ENCODE measurements at regions of chr12 and their contacts with region 1.

Region 1: DNA sequence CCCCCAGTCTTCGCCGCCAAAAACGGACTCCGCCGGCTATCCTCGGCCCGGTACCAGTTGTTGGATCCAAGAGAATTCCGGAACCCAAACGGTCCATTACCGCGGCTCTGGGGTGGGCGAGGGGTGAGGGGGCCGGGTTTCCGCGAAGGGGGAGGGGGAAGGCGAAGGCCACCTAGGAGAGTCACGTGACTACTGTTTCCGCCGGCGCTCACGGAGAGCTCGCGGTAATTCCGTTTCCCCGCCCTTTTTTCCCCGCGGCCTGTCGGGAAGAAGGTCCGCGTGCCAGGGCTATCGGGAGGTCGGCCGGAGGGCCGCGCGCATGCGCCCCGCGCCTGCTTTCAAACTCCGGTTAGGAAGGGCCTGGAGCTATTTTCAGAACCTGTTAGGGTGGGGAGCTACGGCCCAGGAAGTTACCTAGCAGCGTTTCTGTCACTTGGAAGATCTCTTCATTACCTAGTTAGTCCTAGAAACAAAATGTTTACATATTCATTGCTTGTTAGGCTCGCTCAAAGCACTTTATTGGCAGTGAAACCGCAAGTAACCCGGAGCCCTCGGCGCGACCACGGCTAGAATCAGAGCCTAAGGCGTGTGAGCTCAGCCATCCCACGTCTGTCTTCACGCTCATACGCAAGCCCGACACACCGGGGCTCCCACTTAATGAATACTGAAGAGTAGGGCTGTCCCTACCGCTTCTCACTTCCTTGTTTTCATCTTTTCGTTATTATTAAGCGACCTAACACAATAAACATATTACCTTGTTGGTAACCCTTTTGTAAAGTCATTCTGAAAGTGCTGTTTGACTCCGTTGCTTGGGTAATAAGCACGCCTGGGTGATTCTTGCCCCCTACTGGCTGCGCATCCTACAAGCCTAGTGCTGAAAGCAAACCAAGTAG is 624 bp upstream of the SBNO1 start:
- DNase-seq: peak; percentile 99
- ATAC-seq: peak; percentile 90 to 96 (median 94)
- H3K4me3 ChIP-seq: peak overlapping the region; percentile 67 to 98 (median 87)
- H3K27ac ChIP-seq: peak overlapping the region; percentile 82 to 99 (median 95)
- H3K4me1 ChIP-seq: peaks cover 4 to 38% (median 21%) of the 10 kb centered on the region in 12 donors
- H3K27me3 ChIP-seq: no peaks in the 10 kb centered on the region
- CTCF ChIP-seq: peak; percentile 52 to 96 (median 73)
- POLR2A ChIP-seq: peak in 1 of 2 donors; percentile 76

Region 2: DNA sequence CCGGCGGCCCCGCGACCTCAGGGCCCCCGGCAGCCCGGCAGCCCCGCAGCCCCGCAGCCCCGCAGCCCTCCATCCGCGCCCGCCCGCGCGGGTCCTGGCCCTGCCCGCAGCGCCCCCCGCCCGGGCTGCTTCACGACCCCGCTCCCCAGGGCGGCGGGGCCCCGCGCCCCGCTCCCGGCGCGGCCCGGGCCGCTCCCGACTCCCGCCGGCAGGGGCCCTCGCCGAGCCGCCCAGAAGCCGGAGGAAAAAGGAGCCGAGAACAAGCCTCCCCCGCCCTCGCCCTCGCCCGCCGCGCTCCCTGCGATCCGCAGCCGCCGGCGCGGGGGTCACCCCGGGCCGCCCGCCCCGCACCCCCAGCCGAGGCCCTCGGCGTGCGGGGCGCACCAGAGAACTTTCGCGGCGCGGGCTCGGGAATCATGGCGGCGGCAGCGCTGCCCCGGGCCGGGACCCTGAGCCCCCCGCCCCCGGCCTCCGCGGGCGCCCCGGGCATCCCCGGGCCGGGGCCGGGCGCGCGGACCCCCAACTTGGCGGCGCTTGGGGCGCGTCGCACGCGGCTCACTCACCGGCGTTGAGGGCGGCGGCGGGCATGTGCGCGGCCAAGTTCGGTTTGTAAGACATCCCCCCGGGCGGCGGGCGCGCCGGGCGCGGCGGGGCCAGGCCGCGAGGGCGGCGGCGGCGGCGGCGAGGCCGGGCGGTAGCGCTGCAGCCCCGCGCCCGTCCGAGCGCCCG is 94.1 kb before region 1 on chr12:
- intact Hi-C with region 1: loop called in 2 of 10 experiments (anchors 2 kb)
- DNase-seq: peak; percentile 74 to 88 (median 84)
- ATAC-seq: peak in 3 of 4 donors; percentile 56 to 62 (median 58)
- H3K4me3 ChIP-seq: peak overlapping the region; percentile 61 to 93 (median 76)
- H3K27ac ChIP-seq: peak overlapping the region; percentile 58 to 93 (median 84)
- H3K4me1 ChIP-seq: peaks cover 3 to 39% (median 29%) of the 10 kb centered on the region in 12 donors
- H3K27me3 ChIP-seq: no peaks in the 10 kb centered on the region
- CTCF ChIP-seq: peak; percentile 1 to 75 (median 47)
- POLR2A ChIP-seq: no peak

Region 3: DNA sequence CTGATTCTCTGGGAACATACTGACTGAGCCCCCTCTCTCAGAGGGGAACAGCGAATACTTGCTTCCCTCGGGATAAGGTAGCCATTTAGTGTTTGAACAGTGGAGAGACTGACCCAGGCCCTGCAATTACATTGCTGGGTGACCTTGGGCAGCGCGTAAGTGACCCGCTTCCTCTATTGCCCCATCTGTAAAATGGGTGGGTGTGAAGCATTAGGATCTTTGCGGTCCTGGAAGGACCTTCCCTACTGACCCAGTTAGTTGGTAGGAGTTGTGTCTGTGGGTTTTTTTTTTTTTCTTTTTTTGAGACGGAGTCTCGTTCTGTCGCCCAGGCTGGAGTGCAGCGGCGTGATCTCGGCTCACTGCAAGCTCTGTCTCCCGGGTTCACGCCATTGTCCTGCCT is 17.4 kb after region 1 on chr12:
- intact Hi-C with region 1: loop called in 6 of 10 experiments (anchors 1 to 2 kb)
- DNase-seq: peak in 1 of 5 donors; percentile 26
- ATAC-seq: no peak
- H3K4me3 ChIP-seq: peak overlapping the region in 4 of 12 donors; percentile 80 to 89 (median 82)
- H3K27ac ChIP-seq: no peak overlapping the region
- H3K4me1 ChIP-seq: peaks cover 0 to 26% (median 14%) of the 10 kb centered on the region in 12 donors
- H3K27me3 ChIP-seq: no peaks in the 10 kb centered on the region
- CTCF ChIP-seq: no peak
- POLR2A ChIP-seq: no peak

Region 4: DNA sequence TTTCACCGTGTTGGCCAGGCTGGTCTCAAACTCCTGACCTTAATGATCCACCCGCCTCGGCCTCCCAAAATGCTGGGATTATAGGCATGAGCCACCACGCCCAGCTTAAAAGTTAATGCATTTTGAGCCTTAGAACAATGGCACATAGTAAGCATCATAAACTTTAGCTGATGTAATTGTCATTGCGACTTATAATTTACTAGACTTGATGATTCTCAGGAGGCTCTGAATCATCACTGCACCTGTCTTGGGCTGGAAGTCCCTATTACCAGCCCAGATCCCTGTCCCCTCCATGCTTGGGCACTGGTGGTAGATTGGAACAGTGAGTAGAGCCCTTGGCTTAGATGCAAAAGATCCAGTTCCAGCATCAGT is 44.8 kb after region 1 on chr12:
- intact Hi-C with region 1: no loop called
- DNase-seq: no peak
- ATAC-seq: no peak
- H3K4me3 ChIP-seq: no peak overlapping the region
- H3K27ac ChIP-seq: no peak overlapping the region
- H3K4me1 ChIP-seq: peaks cover 0 to 11% (median 3%) of the 10 kb centered on the region in 12 donors
- H3K27me3 ChIP-seq: no peaks in the 10 kb centered on the region
- CTCF ChIP-seq: no peak
- POLR2A ChIP-seq: no peak